ENCODE measurements at regions of chr5 and their contacts with region 1.

Region 1: DNA sequence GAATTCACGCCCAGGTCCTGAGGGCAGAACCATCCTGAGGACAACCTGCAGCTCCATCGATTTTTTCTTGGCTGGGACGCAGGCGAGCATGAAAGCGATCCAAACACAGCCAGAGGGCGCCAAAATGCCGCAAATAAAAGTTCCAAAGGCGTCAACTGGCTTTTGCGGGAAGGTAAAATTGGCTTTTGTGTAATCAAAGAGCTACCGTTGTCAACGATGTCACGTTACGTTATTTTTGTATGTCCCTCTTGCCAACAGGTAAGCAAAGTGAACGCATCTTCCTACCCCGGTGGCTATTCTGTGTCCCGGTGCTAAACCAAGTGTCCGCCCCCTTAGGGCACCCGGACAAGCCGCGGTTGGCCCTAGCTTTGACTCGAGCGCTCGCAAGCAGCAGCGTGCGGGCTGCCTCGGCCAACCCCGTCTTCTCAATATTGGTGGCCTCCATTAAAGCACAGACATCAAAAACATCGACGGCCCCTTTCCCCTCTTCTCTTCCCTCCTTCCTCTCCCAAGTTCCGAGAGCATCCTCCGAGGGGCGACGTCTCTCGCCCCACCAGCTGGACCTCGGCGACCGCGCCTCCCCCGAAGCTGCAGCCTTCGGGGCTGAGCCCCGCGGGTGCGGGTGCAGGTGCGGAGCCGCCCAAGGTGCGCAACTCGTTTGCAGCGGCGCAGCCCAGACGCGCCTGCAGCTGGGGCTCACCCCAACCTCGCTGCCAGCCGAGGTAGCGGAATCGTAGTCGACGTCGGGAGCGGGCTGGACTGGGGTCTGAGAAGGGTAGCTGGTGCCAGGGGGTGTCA is 1.1 kb upstream of the BASP1 start:
- DNase-seq: peak; percentile 91
- H3K4me3 Mint-ChIP-seq: peak overlapping the region; percentile 83
- H3K27ac Mint-ChIP-seq: peak overlapping the region; percentile 52
- H3K4me1 Mint-ChIP-seq: peaks cover 23% of the 10 kb centered on the region
- H3K27me3 Mint-ChIP-seq: no peaks in the 10 kb centered on the region
- CTCF ChIP-seq: peak; percentile 69

Region 2: DNA sequence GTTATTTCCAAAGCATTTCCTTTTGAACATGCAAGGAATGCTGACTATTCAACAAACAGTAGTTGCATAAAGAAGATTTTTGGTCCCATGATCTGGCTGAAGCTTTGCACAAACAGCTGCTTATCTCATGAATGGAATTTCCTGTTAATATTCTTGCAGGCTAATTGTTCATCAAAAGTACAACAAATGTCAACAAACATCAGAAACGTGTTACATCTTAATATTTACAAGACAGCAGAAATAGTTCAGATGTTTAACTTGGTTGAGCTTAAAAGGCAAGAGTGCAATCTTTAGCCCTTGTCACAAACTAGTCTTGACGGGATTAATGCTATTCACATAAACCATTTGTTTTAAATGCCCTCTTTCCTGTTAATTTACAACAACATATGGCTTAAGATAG is 46.9 kb before region 1 on chr5:
- CTCF ChIA-PET with region 1: no interaction called
- POLR2A ChIA-PET with region 1: no interaction called
- intact Hi-C with region 1: no loop called
- DNase-seq: no peak
- H3K4me3 Mint-ChIP-seq: no peak overlapping the region
- H3K27ac Mint-ChIP-seq: no peak overlapping the region
- H3K4me1 Mint-ChIP-seq: no peaks in the 10 kb centered on the region
- H3K27me3 Mint-ChIP-seq: no peaks in the 10 kb centered on the region
- CTCF ChIP-seq: no peak

Region 3: GRCh38 chr5:17255471-17256021 is 39.2 kb after region 1 on chr5:
- CTCF ChIA-PET with region 1: interaction called, 4 read pairs
- POLR2A ChIA-PET with region 1: no interaction called
- intact Hi-C with region 1: loop called (anchors 5 kb)
- DNase-seq: peak; percentile 91
- H3K4me3 Mint-ChIP-seq: peak overlapping the region; percentile 41
- H3K27ac Mint-ChIP-seq: peak overlapping the region; percentile 79
- H3K4me1 Mint-ChIP-seq: peaks cover 50% of the 10 kb centered on the region
- H3K27me3 Mint-ChIP-seq: no peaks in the 10 kb centered on the region
- CTCF ChIP-seq: no peak

Region 4: DNA sequence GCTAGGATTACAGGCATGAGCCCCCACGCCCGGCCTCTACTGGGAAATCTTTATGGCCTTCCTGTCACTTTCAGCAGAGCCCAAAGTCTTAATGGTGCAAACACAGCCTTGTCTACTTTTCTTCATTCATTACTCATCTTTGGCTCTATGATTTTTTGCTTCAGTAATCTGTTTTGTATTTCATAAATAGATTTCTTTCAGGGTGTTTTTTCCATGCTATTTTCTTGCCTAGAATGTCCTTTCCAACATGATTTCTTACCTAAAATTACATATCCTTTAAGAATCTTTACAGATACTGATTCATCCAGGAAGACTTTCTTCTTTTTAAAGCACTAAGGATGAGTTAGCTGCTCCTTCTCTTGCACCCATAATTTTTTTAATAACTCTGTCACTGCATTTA is 630.9 kb after region 1 on chr5:
- CTCF ChIA-PET with region 1: no interaction called
- POLR2A ChIA-PET with region 1: no interaction called
- intact Hi-C with region 1: no loop called
- DNase-seq: no peak
- H3K4me3 Mint-ChIP-seq: no peak overlapping the region
- H3K27ac Mint-ChIP-seq: no peak overlapping the region
- H3K4me1 Mint-ChIP-seq: no peaks in the 10 kb centered on the region
- H3K27me3 Mint-ChIP-seq: no peaks in the 10 kb centered on the region
- CTCF ChIP-seq: no peak

Region 5: GRCh38 chr5:17896605-17897004 is 680.2 kb after region 1 on chr5:
- CTCF ChIA-PET with region 1: interaction called, 3 read pairs
- POLR2A ChIA-PET with region 1: interaction called, 3 read pairs
- intact Hi-C with region 1: loop called (anchors 10 kb)
- DNase-seq: peak; percentile 91
- H3K4me3 Mint-ChIP-seq: no peak overlapping the region
- H3K27ac Mint-ChIP-seq: peak overlapping the region; percentile 57
- H3K4me1 Mint-ChIP-seq: peaks cover 30% of the 10 kb centered on the region
- H3K27me3 Mint-ChIP-seq: no peaks in the 10 kb centered on the region
- CTCF ChIP-seq: no peak

Region 6: GRCh38 chr5:18102733-18103132 is 886.4 kb after region 1 on chr5:
- CTCF ChIA-PET with region 1: interaction called, 14 read pairs
- POLR2A ChIA-PET with region 1: no interaction called
- intact Hi-C with region 1: no loop called
- DNase-seq: peak; percentile 5
- H3K4me3 Mint-ChIP-seq: no peak overlapping the region
- H3K27ac Mint-ChIP-seq: no peak overlapping the region
- H3K4me1 Mint-ChIP-seq: no peaks in the 10 kb centered on the region
- H3K27me3 Mint-ChIP-seq: no peaks in the 10 kb centered on the region
- CTCF ChIP-seq: peak; percentile 6

Region 7: DNA sequence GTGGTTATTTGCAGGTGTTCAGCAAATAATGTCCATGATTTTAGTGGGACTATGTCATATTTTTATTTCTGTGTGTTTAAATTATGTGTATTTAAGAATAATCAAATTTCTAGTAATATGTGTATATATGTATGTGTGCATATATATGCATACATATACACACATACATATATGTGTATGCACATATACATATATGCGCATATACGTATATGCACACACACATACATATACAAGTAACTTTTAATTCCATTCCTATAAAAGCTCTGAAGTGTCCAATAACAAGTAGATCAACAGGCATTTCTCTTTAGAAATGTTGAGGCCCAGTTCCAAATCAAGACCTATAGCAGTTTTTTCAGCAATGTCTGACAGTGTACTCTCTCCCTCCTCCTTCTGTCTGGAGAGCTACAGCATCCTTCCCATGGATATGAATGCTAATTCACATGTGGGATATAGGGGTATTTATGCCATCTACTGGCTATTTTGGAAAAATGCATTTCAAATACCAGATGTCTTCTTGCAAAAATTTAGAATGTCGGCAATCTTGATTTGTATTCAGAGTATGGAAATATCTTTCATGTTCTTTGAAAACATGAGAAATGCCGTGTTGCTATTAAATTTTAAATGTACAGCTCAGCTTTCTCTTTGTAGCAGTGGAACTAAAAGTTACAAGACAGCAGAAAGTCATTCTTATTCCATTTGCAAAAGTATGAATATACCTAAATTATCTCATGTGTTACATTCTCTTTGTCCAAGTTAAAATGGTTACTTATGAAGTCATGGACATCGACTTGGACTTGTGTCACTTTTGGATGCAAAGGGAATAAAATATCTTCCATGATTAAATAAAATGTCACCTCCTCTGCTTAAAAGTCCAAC is 1065.5 kb after region 1 on chr5:
- CTCF ChIA-PET with region 1: interaction called, 30 read pairs
- POLR2A ChIA-PET with region 1: interaction called, 5 read pairs
- intact Hi-C with region 1: loop called (anchors 1 kb)
- DNase-seq: peak; percentile 57
- H3K4me3 Mint-ChIP-seq: no peak overlapping the region
- H3K27ac Mint-ChIP-seq: no peak overlapping the region
- H3K4me1 Mint-ChIP-seq: no peaks in the 10 kb centered on the region
- H3K27me3 Mint-ChIP-seq: no peaks in the 10 kb centered on the region
- CTCF ChIP-seq: peak; percentile 47

Region 8: DNA sequence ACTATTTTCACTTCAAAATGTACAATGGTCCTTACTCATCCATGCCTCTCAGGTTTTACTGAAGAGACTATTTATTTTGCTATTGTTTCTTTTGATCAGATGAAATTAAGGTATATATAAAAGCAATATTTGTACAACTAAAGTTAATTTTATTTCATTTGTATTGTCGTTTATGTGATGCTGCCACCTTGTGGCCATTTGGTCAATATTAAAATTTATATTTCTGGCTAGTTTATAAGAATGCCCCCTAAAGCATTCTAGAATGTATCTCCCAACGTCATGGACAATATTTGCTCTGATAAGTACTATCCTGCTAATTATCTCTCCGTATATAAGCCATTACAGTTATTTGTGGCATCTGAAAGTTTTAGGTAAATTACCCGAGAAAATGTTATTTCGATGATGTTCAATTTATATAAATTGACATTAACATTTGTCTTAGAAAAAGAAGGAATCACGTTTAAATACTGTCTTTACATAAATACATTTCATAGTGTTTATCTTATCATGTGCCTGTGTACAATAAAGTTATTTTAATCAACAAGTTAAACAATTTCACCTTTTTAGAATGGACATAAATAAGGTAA is 1097.9 kb after region 1 on chr5:
- CTCF ChIA-PET with region 1: interaction called, 24 read pairs
- POLR2A ChIA-PET with region 1: interaction called, 6 read pairs
- intact Hi-C with region 1: loop called (anchors 1 kb)
- DNase-seq: peak; percentile 45
- H3K4me3 Mint-ChIP-seq: no peak overlapping the region
- H3K27ac Mint-ChIP-seq: no peak overlapping the region
- H3K4me1 Mint-ChIP-seq: no peaks in the 10 kb centered on the region
- H3K27me3 Mint-ChIP-seq: no peaks in the 10 kb centered on the region
- CTCF ChIP-seq: peak; percentile 41

Measured in MCF 10A (cell line).